GM12878 (cell line): ENCODE measurements at regions of chr3 and their contacts with region 1.

Region 1: DNA sequence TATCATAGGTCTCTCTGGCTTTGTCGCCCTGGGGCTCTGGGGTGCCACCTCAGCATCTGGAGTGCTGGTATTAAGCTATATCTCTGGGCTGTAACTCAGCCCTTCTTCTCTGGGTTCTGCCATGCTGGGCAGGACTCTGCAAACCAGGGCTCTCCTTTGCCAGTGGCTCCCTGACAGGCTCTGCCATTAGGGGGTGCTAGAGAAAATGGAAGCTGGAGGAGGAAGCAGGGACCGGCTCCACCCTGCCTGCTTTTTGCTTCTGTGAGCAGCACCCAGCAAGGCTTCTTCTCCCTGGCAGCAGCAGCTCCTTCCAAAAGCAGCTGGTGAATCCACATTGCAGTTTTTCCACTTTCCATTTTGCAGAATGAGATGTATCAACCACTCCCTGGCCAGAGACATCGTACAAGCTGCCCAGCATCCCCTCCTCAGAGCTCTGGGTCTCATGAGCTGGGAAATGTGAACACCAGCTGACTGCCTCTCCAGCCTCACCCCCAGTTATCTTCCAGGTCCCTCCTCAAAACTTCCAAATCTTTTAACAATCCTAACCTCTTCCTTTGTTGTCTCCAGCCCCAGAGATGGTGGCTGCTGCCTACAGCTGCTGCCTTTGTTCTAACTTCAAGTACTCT is 165.0 kb downstream of the ABHD5 start:
- DNase-seq: peak; percentile 3
- ATAC-seq: peak; percentile 97
- H3K4me3 ChIP-seq: no peak overlapping the region
- H3K27ac ChIP-seq: no peak overlapping the region
- H3K4me1 ChIP-seq: no peaks in the 10 kb centered on the region
- H3K27me3 ChIP-seq: peaks cover 4 to 7% of the 10 kb centered on the region in 2 experiments
- CTCF ChIP-seq: peak; percentile 79 to 80 (median 80)
- EP300 ChIP-seq: no peak
- POLR2A ChIP-seq: no peak
- RAD21 ChIP-seq: peak; percentile 75

Region 2: DNA sequence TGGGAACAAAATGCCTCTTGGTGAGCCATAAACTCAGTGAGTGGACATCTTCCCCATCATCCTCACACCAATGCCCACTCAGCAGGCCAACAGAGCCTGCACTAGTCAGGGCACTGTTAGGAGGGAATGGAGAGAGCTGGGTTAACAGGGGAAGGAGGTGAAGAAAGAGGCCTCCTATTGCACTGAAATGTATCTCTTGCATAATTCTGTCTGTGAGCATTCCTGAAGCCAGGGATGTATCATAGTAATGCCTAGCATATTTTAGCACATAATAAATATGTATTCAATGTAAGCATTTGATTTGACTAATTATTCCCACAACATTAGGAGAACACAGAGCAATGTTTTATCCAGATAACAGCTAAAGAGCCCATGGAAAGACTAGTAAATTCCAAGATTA is 315.2 kb before region 1 on chr3:
- CTCF ChIA-PET with region 1: interaction called, 5 read pairs
- POLR2A ChIA-PET with region 1: no interaction called
- RAD21 ChIA-PET with region 1: no interaction called
- SMC1A ChIA-PET with region 1: interaction called, 3 read pairs
- in situ Hi-C with region 1: no loop called
- intact Hi-C with region 1: loop called (anchors 10 kb)
- DNase-seq: no peak
- ATAC-seq: no peak
- H3K4me3 ChIP-seq: no peak overlapping the region
- H3K27ac ChIP-seq: no peak overlapping the region
- H3K4me1 ChIP-seq: no peaks in the 10 kb centered on the region
- H3K27me3 ChIP-seq: no peaks in the 10 kb centered on the region
- CTCF ChIP-seq: no peak
- EP300 ChIP-seq: no peak
- POLR2A ChIP-seq: no peak
- RAD21 ChIP-seq: no peak

Region 3: DNA sequence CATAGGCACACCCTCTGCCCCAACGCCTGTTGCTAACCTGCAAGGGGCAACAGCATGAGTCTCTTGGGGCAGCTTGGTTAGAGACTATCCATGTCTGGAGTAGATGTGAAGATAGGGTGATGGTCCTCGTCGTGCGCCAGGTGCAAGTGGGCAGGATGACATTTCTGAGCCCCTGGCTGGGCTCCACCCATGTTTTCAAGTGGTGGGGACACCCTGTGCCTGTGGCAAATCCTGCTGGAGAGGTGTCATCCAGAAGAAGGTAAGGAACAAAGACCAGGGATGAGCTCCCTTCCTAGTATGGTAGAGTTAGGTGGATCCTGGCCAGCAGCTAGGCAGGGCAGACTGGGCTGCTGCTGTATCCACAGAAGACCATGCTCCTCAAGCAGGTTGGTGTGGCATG is 12.4 kb before region 1 on chr3:
- CTCF ChIA-PET with region 1: interaction called, 9 read pairs
- POLR2A ChIA-PET with region 1: no interaction called
- RAD21 ChIA-PET with region 1: no interaction called
- SMC1A ChIA-PET with region 1: interaction called, 10 read pairs
- in situ Hi-C with region 1: no loop called
- intact Hi-C with region 1: no loop called
- DNase-seq: no peak
- ATAC-seq: no peak
- H3K4me3 ChIP-seq: no peak overlapping the region
- H3K27ac ChIP-seq: no peak overlapping the region
- H3K4me1 ChIP-seq: no peaks in the 10 kb centered on the region
- H3K27me3 ChIP-seq: no peaks in the 10 kb centered on the region
- CTCF ChIP-seq: no peak
- EP300 ChIP-seq: no peak
- POLR2A ChIP-seq: no peak
- RAD21 ChIP-seq: no peak

Region 4: GRCh38 chr3:43866529-43867353 is 11.0 kb after region 1 on chr3:
- CTCF ChIA-PET with region 1: interaction called, 26 read pairs
- POLR2A ChIA-PET with region 1: no interaction called
- RAD21 ChIA-PET with region 1: no interaction called
- SMC1A ChIA-PET with region 1: interaction called, 6 read pairs
- in situ Hi-C with region 1: no loop called
- intact Hi-C with region 1: no loop called
- DNase-seq: no peak
- ATAC-seq: no peak
- H3K4me3 ChIP-seq: no peak overlapping the region
- H3K27ac ChIP-seq: no peak overlapping the region
- H3K4me1 ChIP-seq: no peaks in the 10 kb centered on the region
- H3K27me3 ChIP-seq: peaks cover 6 to 9% of the 10 kb centered on the region in 2 experiments; a peak in 3 of 4 replicates
- CTCF ChIP-seq: no peak
- EP300 ChIP-seq: no peak
- POLR2A ChIP-seq: no peak
- RAD21 ChIP-seq: no peak

Region 5: DNA sequence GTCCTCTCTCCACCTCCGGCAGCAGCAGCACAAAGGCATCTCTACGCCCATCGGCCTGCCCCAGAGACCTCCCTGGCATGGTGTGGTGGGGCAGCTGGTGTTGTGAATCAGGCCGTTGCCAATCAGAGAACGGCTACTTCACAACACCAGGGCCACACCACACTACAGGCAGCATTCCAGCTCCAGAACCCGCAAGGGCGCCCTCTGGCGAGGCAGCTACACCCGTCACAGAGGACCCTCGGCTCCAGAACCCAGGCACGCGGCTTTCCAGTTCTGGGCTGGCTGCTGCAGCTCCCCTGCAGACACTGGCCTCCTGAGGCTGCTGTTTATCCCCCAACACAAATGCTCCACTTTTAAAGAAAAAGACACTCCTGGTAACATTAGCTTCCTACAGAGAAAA is 258.4 kb after region 1 on chr3:
- CTCF ChIA-PET with region 1: interaction called, 30 read pairs
- POLR2A ChIA-PET with region 1: no interaction called
- RAD21 ChIA-PET with region 1: interaction called, 11 read pairs
- SMC1A ChIA-PET with region 1: interaction called, 3 read pairs
- in situ Hi-C with region 1: no loop called
- intact Hi-C with region 1: no loop called
- DNase-seq: no peak
- ATAC-seq: peak; percentile 96
- H3K4me3 ChIP-seq: no peak overlapping the region
- H3K27ac ChIP-seq: no peak overlapping the region
- H3K4me1 ChIP-seq: no peaks in the 10 kb centered on the region
- H3K27me3 ChIP-seq: no peaks in the 10 kb centered on the region
- CTCF ChIP-seq: peak; percentile 59 to 68 (median 59)
- EP300 ChIP-seq: no peak
- POLR2A ChIP-seq: no peak
- RAD21 ChIP-seq: peak; percentile 63

Region 6: DNA sequence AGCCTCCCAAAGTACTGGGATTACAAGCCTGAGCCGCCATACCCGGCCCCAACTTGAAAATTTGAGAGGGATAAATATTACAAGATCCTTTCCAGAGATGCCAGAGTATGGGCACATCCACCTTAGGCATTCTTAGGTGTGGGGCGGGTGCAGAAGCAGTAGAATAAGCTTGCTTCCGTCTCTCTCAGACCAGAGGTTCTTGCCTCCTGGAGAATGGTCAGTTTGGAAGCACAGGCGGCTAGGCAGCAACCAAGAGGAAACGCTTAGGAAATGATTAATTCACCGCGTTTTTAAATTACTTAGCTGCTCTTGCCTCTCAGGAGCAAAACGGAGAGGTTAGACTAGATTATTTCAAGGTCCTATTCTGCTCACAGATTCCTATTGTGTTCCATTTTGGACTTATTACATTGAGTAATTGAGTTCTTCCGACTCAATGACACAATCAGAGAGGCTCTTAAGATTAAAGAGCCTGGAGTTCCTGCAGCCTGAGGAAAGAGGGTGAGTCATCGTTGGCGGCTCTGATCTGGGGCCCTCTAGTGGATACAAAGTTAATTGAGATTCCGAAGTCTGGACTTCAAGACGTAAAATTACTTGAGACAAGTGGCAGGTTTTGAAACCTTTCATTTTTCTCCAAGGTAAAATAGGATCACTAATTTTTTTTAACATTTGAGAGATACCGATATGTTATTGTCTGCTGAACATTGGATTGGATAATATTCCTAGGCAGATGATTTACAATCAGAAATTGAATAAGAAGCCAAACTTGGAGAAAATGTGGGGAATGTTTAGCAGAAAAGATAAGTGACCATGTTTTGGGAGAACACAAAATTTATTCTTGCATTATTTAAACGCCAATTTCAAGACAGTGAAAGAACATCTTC is 380.1 kb after region 1 on chr3:
- CTCF ChIA-PET with region 1: interaction called, 21 read pairs
- POLR2A ChIA-PET with region 1: no interaction called
- RAD21 ChIA-PET with region 1: interaction called, 8 read pairs
- SMC1A ChIA-PET with region 1: interaction called, 4 read pairs
- in situ Hi-C with region 1: no loop called
- intact Hi-C with region 1: no loop called
- DNase-seq: peak; percentile 11
- ATAC-seq: peak; percentile 90
- H3K4me3 ChIP-seq: no peak overlapping the region
- H3K27ac ChIP-seq: no peak overlapping the region
- H3K4me1 ChIP-seq: no peaks in the 10 kb centered on the region
- H3K27me3 ChIP-seq: no peaks in the 10 kb centered on the region
- CTCF ChIP-seq: peak; percentile 67 to 83 (median 68)
- EP300 ChIP-seq: no peak
- POLR2A ChIP-seq: no peak
- RAD21 ChIP-seq: peak; percentile 50